Activated CD8-positive, alpha-beta T cell treated with anti-CD3 and anti-CD28 coated beads for 36 hours (primary cell): ENCODE measurements at regions of chr22 and their contacts with region 1.

Region 1: GRCh38 chr22:42169055-42169469 is 38.5 kb upstream of the CYP2D6 start:
- DNase-seq: peak; percentile 89
- ATAC-seq: peak; percentile 94
- H3K4me3 Mint-ChIP-seq: no peak overlapping the region
- H3K27ac Mint-ChIP-seq: no peak overlapping the region
- H3K4me1 Mint-ChIP-seq: peaks cover 17% of the 10 kb centered on the region
- H3K27me3 Mint-ChIP-seq: no peaks in the 10 kb centered on the region
- CTCF ChIP-seq: peak; percentile 91

Region 2: GRCh38 chr22:42114721-42115120 is 54.3 kb before region 1 on chr22:
- CTCF ChIA-PET with region 1: no interaction called
- POLR2A ChIA-PET with region 1: no interaction called
- intact Hi-C with region 1: no loop called
- DNase-seq: peak; percentile 34
- ATAC-seq: no peak
- H3K4me3 Mint-ChIP-seq: no peak overlapping the region
- H3K27ac Mint-ChIP-seq: no peak overlapping the region
- H3K4me1 Mint-ChIP-seq: peaks cover 8% of the 10 kb centered on the region
- H3K27me3 Mint-ChIP-seq: no peaks in the 10 kb centered on the region
- CTCF ChIP-seq: peak; percentile 25

Region 3: DNA sequence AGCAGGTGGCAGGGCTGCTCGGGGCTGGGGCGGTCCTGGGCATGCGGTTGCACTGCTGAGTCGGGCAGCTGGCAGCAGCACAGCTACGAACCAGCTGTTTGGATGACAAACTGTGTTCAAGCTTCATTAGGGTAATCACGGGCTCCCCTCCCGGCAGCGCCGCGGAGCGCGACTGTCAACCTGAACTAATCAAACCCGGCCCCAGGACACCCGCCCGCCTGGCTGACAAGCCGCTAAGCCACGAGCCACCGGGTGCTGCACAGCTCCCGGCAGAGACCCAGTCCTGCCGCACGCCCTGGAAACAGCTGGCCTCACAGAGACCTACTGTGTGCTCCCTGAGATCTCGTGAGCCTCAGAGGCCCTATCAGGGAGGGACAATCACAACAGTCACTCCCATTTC is 162.0 kb after region 1 on chr22:
- CTCF ChIA-PET with region 1: no interaction called
- POLR2A ChIA-PET with region 1: no interaction called
- intact Hi-C with region 1: no loop called
- DNase-seq: no peak
- ATAC-seq: no peak
- H3K4me3 Mint-ChIP-seq: no peak overlapping the region
- H3K27ac Mint-ChIP-seq: no peak overlapping the region
- H3K4me1 Mint-ChIP-seq: peaks cover 27% of the 10 kb centered on the region
- H3K27me3 Mint-ChIP-seq: no peaks in the 10 kb centered on the region
- CTCF ChIP-seq: no peak

Region 4: DNA sequence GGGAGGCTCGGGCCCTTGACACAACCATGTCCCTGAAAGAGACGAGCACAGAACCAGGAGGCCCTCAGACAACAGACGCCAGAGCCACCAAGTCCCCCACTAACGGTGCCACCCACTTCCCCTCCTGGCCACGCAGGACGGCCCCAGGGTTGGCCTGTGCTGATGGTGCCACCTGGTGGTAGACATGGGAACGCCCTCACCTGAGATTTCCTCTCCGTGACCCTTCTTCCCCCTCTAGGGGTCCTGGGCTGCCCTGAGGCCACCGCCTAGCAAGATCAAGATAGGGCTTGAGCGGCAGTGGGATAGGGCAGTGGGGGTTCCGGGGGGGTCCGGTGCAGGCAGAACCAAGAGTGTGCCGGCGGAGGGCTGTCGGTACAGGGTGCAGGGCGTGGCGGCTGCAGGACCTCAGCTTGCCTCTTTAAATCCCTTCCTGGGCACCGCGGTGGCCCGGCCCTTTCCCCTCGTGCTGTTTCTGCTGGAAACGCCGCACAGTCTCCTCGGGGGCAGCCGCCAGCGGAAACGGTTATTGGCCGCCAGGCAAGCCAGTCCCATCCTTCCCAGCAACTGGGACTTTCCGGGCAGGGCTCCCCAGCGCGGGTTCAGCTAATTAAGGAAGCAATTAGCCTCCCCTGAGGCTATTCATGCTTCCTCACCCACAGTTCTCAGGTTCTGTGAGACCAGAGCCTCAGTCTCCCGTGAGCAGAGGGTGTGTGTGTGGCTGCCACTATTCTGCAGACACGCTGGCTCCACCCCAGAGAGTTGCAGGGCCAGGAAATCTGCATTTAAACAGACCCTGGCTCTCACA is 268.6 kb after region 1 on chr22:
- CTCF ChIA-PET with region 1: interaction called, 11 read pairs
- POLR2A ChIA-PET with region 1: no interaction called
- intact Hi-C with region 1: loop called (anchors 2 kb)
- DNase-seq: peak; percentile 84
- ATAC-seq: peak; percentile 96
- H3K4me3 Mint-ChIP-seq: peak overlapping the region; percentile 68
- H3K27ac Mint-ChIP-seq: no peak overlapping the region
- H3K4me1 Mint-ChIP-seq: peaks cover 17% of the 10 kb centered on the region
- H3K27me3 Mint-ChIP-seq: peaks cover 1% of the 10 kb centered on the region
- CTCF ChIP-seq: peak; percentile 94